ENCODE measurements at regions of chr19 and their contacts with region 1.

Region 1: DNA sequence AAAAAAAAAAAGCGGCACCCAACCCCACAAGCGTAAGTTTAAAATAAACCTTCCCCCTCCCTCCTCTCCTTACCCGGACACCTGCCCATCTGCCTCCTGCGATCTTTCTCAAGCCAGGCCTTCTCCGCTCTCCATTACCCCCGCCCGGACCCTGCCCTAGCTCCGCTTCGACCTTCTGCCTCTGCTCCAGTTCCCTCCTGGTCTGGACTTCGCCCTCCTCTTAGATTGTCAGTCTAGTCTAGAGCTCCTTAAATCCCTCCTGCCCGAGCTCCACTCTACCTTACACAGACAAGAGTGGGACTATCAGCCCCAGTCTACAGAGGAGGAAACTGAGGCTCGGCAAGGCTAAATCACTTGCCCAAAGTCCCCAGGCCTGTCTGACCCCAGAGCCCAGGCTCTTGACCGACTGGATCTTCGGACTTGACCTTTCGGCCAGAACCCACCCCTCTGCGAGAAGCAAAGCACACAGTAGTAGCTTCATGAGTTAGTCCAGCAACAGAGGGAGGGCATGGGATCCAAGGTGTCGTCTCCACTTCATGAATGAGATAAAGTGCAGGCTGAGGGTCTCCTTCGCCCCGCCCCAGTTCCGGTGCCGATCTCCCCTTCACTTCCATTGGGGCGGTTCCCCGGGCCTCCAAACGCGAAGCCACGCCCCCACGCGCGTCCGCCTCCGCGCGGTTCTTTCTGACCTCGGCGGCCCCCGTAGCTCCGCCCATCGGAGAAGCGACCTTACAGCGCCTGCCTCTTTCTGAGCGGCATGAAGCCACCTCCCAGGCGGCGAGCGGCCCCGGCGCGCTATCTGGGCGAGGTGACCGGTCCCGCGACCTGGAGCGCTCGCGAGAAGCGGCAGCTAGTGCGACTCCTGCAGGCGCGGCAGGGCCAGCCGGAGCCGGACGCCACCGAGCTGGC is at the start of gene SNAPC2:
- DNase-seq: peak; percentile 96
- H3K4me3 Mint-ChIP-seq: peak within 1 kb of the TSS; percentile 86
- H3K27ac Mint-ChIP-seq: peak within 1 kb of the TSS; percentile 93
- H3K4me1 Mint-ChIP-seq: peaks cover 22% of the 10 kb centered on the region
- H3K27me3 Mint-ChIP-seq: peaks cover 18% of the 10 kb centered on the region
- total RNA-seq, gene SNAPC2: 21.3 and 22.4 TPM in 2 replicates

Region 2: GRCh38 chr19:7636691-7637373 is 283.0 kb before region 1 on chr19 and contains the start of gene STXBP2:
- intact Hi-C with region 1: loop called (anchors 1 kb)
- DNase-seq: peak; percentile 85
- H3K4me3 Mint-ChIP-seq: peak within 1 kb of the TSS; percentile 85
- H3K27ac Mint-ChIP-seq: peak within 1 kb of the TSS; percentile 77
- H3K4me1 Mint-ChIP-seq: peaks cover 35% of the 10 kb centered on the region
- H3K27me3 Mint-ChIP-seq: no peaks in the 10 kb centered on the region
- total RNA-seq, gene STXBP2: 101 and 102 TPM in 2 replicates

Region 3: GRCh38 chr19:7868676-7869452 is 51.0 kb before region 1 on chr19:
- intact Hi-C with region 1: loop called (anchors 1 kb)
- DNase-seq: peak; percentile 75
- H3K4me3 Mint-ChIP-seq: peak overlapping the region; percentile 61
- H3K27ac Mint-ChIP-seq: no peak overlapping the region
- H3K4me1 Mint-ChIP-seq: peaks cover 21% of the 10 kb centered on the region
- H3K27me3 Mint-ChIP-seq: peaks cover 44% of the 10 kb centered on the region

Region 4: DNA sequence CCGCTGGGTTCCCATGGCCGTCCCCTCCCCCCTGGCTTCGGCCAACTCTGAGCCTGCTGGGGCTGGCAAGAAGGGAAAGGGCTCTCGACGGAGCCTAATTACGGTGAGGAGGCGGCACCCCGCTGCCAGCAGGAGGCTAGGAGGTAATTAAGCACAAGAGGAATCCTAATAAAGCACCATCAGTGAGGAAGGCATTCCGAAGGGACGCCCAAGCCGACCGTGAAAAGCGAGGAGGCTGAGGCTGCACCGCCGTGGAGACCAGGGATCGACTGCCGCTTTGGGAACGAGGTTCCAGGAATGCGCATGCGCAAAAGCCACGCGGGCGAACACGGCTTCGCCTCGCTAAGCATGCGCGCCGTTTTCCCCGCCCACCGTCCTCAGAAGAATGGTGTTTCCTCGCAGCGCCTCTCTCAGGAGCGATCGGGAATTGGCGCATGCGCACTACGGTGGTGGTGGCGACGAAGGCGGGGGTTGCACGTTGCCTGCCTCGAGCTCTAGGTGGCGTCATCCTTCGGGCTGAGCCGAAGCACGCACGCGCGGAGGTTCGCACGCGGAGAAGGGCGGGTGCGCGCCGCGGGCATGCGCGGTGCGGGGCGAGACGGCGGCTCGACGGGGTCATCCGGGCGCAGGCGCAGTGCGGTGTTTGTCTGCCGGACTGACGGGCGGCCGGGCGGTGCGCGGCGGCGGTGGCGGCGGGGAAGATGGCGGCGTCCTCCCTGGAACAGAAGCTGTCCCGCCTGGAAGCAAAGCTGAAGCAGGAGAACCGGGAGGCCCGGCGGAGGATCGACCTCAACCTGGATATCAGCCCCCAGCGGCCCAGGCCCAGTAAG is 16.4 kb before region 1 on chr19 and contains the start of gene MAP2K7:
- intact Hi-C with region 1: loop called (anchors 1 kb)
- DNase-seq: peak; percentile 100
- H3K4me3 Mint-ChIP-seq: peak within 1 kb of the TSS; percentile 90
- H3K27ac Mint-ChIP-seq: peak within 1 kb of the TSS; percentile 94
- H3K4me1 Mint-ChIP-seq: peaks cover 29% of the 10 kb centered on the region
- H3K27me3 Mint-ChIP-seq: peaks cover 2% of the 10 kb centered on the region
- total RNA-seq, gene MAP2K7: 47.6 and 51.9 TPM in 2 replicates

Region 5: GRCh38 chr19:8050274-8051096 is 130.6 kb after region 1 on chr19:
- intact Hi-C with region 1: loop called (anchors 1 kb)
- DNase-seq: peak; percentile 73
- H3K4me3 Mint-ChIP-seq: peak overlapping the region; percentile 49
- H3K27ac Mint-ChIP-seq: peak overlapping the region; percentile 52
- H3K4me1 Mint-ChIP-seq: peaks cover 27% of the 10 kb centered on the region
- H3K27me3 Mint-ChIP-seq: peaks cover 13% of the 10 kb centered on the region

Region 6: DNA sequence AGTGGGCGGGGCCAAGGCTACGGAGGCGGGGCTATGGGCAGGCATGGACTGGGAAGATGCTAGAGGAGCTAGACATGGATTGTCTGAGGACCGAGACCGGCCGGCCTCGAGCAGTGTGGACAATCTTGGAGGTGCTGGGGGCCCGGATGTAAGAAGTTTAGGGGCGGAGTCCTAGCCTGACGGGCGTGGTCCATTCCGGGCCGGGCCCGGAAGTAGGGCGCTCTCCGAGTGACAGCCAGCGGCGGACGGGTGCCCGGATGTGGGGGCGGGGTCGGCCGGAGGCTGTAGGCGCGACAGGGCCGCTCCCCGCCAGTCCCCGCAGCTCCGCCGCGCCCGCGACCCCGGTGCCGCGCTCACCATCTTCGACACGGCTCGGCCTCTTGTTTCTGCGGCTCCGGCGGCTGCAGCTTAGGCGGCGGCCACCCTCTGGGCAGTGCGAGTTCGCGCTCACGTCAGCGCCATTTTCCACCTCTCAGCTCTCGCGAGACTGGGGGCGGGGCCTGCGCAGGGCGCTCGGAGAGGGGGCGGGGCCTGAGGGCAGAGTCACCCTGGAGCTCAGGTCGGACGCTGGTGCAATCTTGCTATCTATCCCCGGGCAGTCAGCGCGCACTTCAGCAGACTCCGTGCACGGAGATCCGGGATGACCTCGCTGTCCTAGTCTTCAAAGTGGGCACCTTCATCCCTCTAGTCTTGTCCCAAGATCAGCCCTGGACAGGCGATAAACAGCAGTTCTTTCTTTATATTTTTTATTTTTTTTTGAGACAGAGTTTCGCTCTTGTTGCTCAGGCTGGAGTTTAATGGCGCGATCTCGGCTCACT is 594.0 kb after region 1 on chr19 and contains the start of gene ZNF414:
- intact Hi-C with region 1: loop called (anchors 1 kb)
- DNase-seq: peak; percentile 92
- H3K4me3 Mint-ChIP-seq: peak within 1 kb of the TSS; percentile 93
- H3K27ac Mint-ChIP-seq: peak within 1 kb of the TSS; percentile 98
- H3K4me1 Mint-ChIP-seq: peaks cover 52% of the 10 kb centered on the region
- H3K27me3 Mint-ChIP-seq: no peaks in the 10 kb centered on the region
- total RNA-seq, gene ZNF414: 22.1 and 23.6 TPM in 2 replicates